ENCODE measurements at regions of chr7 and their contacts with region 1.

Region 1: GRCh38 chr7:32140210-32140939 is 70.2 kb upstream of the PDE1C start:
- DNase-seq: no peak
- ATAC-seq: no peak
- H3K4me3 ChIP-seq: no peak overlapping the region
- H3K27ac ChIP-seq: no peak overlapping the region
- H3K4me1 ChIP-seq: no peaks in the 10 kb centered on the region
- H3K27me3 ChIP-seq: no peaks in the 10 kb centered on the region
- CTCF ChIP-seq: no peak

Region 2: GRCh38 chr7:32164346-32164957 is 24.1 kb after region 1 on chr7:
- CTCF ChIA-PET with region 1: no interaction called
- POLR2A ChIA-PET with region 1: no interaction called
- in situ Hi-C with region 1: no loop called
- intact Hi-C with region 1: loop called (anchors 2 kb)
- DNase-seq: no peak
- ATAC-seq: no peak
- H3K4me3 ChIP-seq: no peak overlapping the region
- H3K27ac ChIP-seq: no peak overlapping the region
- H3K4me1 ChIP-seq: no peaks in the 10 kb centered on the region
- H3K27me3 ChIP-seq: no peaks in the 10 kb centered on the region
- CTCF ChIP-seq: peak; percentile 57

Measured in Panc1 (cell line).